Calu3 (cell line): ENCODE measurements at regions of chr17 and their contacts with region 1.

Region 1: DNA sequence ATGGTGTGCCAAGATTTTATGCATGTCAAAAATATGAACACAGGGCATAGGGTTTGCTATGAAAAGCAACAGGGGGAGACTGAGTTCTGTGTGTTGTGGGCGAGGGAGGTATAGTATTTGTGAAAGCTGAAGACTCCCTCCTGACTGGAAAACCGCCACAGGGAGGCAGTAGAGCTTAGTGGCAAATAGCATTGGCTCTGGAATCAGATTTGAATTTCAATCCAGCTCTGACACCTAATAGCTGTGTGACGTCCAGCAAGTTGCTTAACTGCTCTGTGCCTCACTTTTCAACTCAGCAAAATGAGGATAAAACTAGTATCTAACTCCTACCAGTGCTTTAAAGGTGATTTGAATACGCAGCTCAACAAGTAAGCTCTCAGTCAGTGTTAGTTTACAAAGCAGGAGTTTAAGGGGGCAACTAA is 22.0 kb downstream of the KPNA2 start:
- DNase-seq: peak; percentile 54
- H3K4me3 Mint-ChIP-seq: no peak overlapping the region
- H3K27ac Mint-ChIP-seq: no peak overlapping the region
- H3K4me1 Mint-ChIP-seq: peaks cover 8% of the 10 kb centered on the region
- H3K27me3 Mint-ChIP-seq: no peaks in the 10 kb centered on the region
- CTCF ChIP-seq: peak; percentile 36

Region 2: DNA sequence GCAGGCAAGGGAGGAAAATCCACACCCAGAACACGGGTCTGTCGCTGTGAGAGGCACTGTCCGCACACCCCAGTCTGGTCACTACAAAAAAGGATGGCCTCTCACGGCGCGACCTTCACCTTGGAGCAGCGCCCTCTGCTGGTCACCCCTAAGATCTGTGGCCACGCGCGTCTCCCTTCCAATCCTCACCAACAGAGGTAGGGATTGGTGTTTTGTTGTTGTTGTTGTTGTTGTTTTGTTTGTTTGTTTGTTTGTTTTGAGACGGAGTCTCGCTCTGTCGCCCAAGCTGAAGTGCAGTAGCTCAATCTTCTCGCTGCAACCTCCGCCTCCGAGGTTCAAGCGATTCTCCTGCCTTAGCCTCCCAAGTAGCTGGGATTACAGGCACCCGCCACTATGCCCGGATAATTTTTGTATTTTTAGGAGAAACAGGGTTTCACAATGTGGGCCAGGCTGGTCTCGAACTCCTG is 46.3 kb before region 1 on chr17:
- CTCF ChIA-PET with region 1: interaction called, 13 read pairs
- intact Hi-C with region 1: no loop called
- DNase-seq: peak; percentile 43
- H3K4me3 Mint-ChIP-seq: no peak overlapping the region
- H3K27ac Mint-ChIP-seq: no peak overlapping the region
- H3K4me1 Mint-ChIP-seq: no peaks in the 10 kb centered on the region
- H3K27me3 Mint-ChIP-seq: no peaks in the 10 kb centered on the region
- CTCF ChIP-seq: peak; percentile 70

Region 3: DNA sequence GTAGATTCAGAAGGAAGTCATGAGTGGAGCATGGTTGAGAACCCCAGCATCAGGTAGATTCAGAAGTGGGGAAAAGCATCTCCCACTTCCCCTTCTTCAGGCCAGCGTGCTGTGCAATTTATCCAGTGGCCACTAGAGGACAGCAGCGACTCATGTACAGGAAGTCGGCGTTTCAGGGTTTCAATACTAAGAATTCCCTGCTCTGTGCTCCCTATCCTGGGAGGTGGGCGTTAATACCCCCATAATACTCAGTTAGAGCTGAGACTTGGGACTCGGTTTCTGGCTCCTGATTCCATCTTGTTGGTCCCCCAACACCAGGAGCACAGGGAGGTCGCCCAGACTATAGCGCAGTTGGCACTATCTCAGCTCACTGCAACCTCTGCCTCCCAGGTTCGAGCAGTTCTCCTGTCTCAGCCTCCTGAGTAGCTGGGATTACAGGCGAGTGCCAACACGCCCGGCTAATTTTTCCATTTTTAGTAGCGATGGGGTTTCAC is 115.0 kb after region 1 on chr17:
- CTCF ChIA-PET with region 1: no interaction called
- intact Hi-C with region 1: no loop called
- DNase-seq: peak; percentile 72
- H3K4me3 Mint-ChIP-seq: no peak overlapping the region
- H3K27ac Mint-ChIP-seq: no peak overlapping the region
- H3K4me1 Mint-ChIP-seq: no peaks in the 10 kb centered on the region
- H3K27me3 Mint-ChIP-seq: no peaks in the 10 kb centered on the region
- CTCF ChIP-seq: peak; percentile 86

Region 4: DNA sequence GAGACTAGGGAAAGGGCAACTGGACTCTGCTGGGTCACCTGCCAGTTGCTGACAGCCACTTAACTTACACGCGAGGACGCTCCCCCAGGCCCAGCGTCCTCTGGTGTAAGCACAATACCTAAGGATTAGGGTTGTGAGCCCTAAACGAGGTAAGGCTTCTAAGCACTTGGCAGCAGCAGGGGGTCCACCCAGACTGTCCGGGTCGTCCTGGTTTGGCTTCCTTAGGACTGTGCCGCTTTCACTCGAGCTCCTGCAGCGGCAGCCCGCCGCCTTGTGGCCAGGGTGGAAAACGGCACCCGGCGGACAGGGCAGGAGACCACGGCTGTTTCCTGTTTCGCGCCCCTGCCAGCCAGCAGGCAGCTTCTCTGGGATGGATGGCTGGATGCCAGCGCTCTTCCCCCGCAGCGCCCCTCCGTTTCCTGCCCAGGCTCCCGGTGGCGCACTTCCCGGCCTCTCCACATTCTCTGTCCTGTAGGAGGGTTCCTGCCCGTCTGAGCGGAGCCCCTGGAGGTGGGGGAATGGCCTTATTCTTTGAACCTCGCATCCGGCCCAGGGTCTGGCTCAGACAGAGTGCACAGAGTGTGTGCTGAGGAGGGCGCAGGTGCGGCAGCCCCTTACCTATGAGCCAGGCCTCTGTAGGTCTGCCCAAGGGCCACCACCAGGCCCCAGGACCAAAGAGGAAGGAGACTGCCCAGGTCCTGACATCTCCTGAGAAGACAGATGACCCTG is 143.3 kb after region 1 on chr17:
- CTCF ChIA-PET with region 1: interaction called, 5 read pairs
- intact Hi-C with region 1: loop called (anchors 2 kb)
- DNase-seq: peak; percentile 84
- H3K4me3 Mint-ChIP-seq: no peak overlapping the region
- H3K27ac Mint-ChIP-seq: no peak overlapping the region
- H3K4me1 Mint-ChIP-seq: peaks cover 8% of the 10 kb centered on the region
- H3K27me3 Mint-ChIP-seq: peaks cover 42% of the 10 kb centered on the region
- CTCF ChIP-seq: peak; percentile 69